H1 (cell line): ENCODE measurements at regions of chr18 and their contacts with region 1.

Region 1: DNA sequence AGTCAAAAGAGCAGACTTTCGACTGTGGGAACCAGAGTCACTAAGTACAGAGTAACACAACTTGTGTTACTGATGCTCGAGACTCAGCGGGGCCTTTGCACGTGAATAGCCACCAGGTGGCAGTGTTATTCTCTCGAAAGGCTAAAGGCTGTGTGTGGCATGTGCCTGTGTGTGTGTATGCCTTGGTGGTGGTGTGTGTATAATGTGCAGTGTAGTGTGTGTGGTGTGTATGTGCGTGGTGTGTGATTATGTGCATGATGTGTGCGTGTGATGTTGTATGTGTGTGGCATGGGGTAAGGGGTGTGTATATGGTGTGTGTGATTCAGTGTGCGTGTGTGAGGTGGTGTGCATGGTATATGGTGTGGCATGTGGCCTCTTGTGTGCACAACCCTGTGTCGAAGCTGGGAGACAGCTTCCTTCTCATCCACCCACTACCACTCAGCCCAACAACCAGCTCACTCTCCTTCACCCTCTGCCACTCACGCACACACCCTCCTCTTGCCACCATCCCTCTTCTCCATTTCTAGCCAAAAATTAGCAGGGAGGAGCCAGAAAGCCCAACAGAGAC is 83.0 kb upstream of the ZNF532 start:
- DNase-seq: peak; percentile 56 to 86
- H3K4me3 ChIP-seq: no peak overlapping the region
- H3K27ac ChIP-seq: no peak overlapping the region
- H3K4me1 ChIP-seq: peaks cover 5 to 17% (median 11%) of the 10 kb centered on the region in 4 experiments
- H3K27me3 ChIP-seq: no peaks in the 10 kb centered on the region
- CTCF ChIP-seq: peak; percentile 75 to 92 (median 86)
- EP300 ChIP-seq: no peak
- POLR2A ChIP-seq: no peak
- RAD21 ChIP-seq: peak; percentile 95 to 98

Region 2: GRCh38 chr18:58745914-58746313 is 35.8 kb before region 1 on chr18:
- CTCF ChIA-PET with region 1: no interaction called
- POLR2A ChIA-PET with region 1: no interaction called
- DNase-seq: no peak
- H3K4me3 ChIP-seq: no peak overlapping the region
- H3K27ac ChIP-seq: no peak overlapping the region
- H3K4me1 ChIP-seq: no peaks in the 10 kb centered on the region
- H3K27me3 ChIP-seq: no peaks in the 10 kb centered on the region
- CTCF ChIP-seq: no peak
- EP300 ChIP-seq: no peak
- POLR2A ChIP-seq: no peak
- RAD21 ChIP-seq: no peak

Region 3: DNA sequence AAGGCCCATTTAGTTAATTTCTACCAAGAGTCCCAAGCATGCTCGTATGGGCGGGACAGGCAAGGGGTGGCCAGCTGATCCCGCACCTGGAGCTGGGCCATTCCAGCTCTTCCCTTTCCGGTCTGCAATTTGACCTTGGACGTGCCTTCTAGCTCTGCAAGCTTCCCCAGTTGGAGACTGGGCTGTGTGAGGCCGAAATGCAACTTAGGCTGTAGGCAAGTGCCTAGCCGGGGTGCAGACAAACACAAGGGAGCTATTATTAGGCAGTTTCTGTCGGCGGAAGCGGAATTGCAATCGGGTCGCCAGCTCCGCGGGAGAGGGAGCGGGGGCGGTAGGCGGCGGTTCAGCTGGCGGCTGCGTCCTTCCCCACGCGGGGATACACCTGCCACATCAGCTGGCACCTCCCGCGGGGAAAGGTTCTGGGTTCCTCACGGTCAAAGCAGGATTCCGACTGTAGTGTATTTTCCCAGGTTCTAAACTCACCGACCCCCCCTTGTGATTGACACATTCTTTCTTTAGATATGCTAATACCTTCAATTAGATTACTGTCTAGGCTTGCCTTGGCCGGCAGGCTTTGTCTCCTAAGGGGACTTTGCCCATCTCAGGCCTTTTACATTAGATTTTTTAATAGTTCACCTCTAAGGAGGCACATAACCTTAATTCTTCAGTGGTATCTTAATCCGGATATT is 65.8 kb after region 1 on chr18:
- CTCF ChIA-PET with region 1: interaction called, 15 read pairs
- POLR2A ChIA-PET with region 1: interaction called, 4 read pairs
- DNase-seq: peak; percentile 88 to 94
- H3K4me3 ChIP-seq: peak overlapping the region in 1 of 4 experiments; percentile 28; a peak in 4 of 8 replicates
- H3K27ac ChIP-seq: peak overlapping the region; percentile 75
- H3K4me1 ChIP-seq: peaks cover 14 to 35% (median 34%) of the 10 kb centered on the region in 4 experiments; a peak in 6 of 7 replicates
- H3K27me3 ChIP-seq: no peaks in the 10 kb centered on the region
- CTCF ChIP-seq: no peak
- EP300 ChIP-seq: peak in 1 of 2 experiments; percentile 83; a peak in 1 of 3 replicates
- POLR2A ChIP-seq: peak in 1 of 2 experiments; percentile 57; a peak in 1 of 3 replicates
- RAD21 ChIP-seq: peak in 1 of 2 experiments; percentile 5; a peak in 1 of 4 replicates

Region 4: DNA sequence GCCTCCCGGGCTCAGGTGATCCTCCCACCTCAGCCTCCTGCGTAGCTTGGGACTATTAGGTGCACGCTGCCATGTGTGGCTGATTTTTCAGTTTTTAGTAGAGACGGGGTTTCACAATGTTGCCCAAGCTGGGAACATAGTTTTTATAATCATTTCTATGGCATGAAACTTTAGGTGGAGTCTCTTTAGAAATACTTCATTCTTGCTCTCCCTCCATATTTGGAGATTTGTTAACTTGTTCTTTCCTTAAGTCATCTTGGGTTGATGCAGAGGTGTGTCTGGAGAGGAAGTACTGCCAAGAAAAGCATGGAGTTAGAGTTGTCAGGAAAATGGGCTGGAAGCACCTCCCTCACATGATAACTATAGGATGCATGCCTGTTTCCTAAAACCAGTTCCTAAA is 100.3 kb after region 1 on chr18:
- CTCF ChIA-PET with region 1: interaction called, 52 read pairs
- POLR2A ChIA-PET with region 1: interaction called, 5 read pairs
- DNase-seq: no peak
- H3K4me3 ChIP-seq: no peak overlapping the region
- H3K27ac ChIP-seq: no peak overlapping the region
- H3K4me1 ChIP-seq: peaks cover 0 to 8% (median 1%) of the 10 kb centered on the region in 4 experiments; a peak in 2 of 7 replicates
- H3K27me3 ChIP-seq: no peaks in the 10 kb centered on the region
- CTCF ChIP-seq: no peak
- EP300 ChIP-seq: no peak
- POLR2A ChIP-seq: no peak
- RAD21 ChIP-seq: no peak

Region 5: GRCh38 chr18:58887613-58887963 is 105.9 kb after region 1 on chr18:
- CTCF ChIA-PET with region 1: interaction called, 52 read pairs
- POLR2A ChIA-PET with region 1: interaction called, 3 read pairs
- DNase-seq: no peak
- H3K4me3 ChIP-seq: no peak overlapping the region
- H3K27ac ChIP-seq: peak overlapping the region; percentile 23; the same call in 1 of the 2 replicates
- H3K4me1 ChIP-seq: peaks cover 0 to 9% (median 6%) of the 10 kb centered on the region in 4 experiments; a peak in 5 of 7 replicates
- H3K27me3 ChIP-seq: no peaks in the 10 kb centered on the region
- CTCF ChIP-seq: no peak
- EP300 ChIP-seq: no peak
- POLR2A ChIP-seq: no peak
- RAD21 ChIP-seq: no peak

Region 6: DNA sequence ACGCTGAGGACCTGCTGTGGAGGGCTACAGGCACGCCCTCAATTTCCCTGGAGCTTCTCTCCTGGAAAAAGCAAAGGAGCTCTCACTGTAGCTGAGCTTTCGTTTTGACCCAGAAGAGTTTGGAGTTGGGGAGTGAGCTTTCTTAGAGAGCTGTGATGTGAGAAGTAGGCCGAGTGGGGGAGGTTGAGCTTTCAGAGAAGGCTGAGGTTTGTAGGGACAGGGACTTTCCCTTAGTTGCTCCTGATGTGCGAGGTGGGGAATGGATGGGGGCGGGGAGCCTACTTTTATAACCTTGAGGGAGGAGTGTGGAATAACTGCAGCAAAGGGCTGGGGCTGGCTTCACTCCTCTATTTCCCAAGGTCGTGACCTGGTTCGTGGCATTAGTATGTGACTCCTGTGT is 130.1 kb after region 1 on chr18:
- CTCF ChIA-PET with region 1: interaction called, 10 read pairs
- POLR2A ChIA-PET with region 1: interaction called, 5 read pairs
- DNase-seq: peak in 1 of 2 experiments; percentile 46
- H3K4me3 ChIP-seq: peak overlapping the region in 1 of 4 experiments; percentile 16; a peak in 1 of 8 replicates
- H3K27ac ChIP-seq: peak overlapping the region; percentile 53; the same call in 1 of the 2 replicates
- H3K4me1 ChIP-seq: peaks cover 7 to 42% (median 40%) of the 10 kb centered on the region in 4 experiments
- H3K27me3 ChIP-seq: no peaks in the 10 kb centered on the region
- CTCF ChIP-seq: no peak
- EP300 ChIP-seq: no peak
- POLR2A ChIP-seq: no peak
- RAD21 ChIP-seq: no peak

Region 7: DNA sequence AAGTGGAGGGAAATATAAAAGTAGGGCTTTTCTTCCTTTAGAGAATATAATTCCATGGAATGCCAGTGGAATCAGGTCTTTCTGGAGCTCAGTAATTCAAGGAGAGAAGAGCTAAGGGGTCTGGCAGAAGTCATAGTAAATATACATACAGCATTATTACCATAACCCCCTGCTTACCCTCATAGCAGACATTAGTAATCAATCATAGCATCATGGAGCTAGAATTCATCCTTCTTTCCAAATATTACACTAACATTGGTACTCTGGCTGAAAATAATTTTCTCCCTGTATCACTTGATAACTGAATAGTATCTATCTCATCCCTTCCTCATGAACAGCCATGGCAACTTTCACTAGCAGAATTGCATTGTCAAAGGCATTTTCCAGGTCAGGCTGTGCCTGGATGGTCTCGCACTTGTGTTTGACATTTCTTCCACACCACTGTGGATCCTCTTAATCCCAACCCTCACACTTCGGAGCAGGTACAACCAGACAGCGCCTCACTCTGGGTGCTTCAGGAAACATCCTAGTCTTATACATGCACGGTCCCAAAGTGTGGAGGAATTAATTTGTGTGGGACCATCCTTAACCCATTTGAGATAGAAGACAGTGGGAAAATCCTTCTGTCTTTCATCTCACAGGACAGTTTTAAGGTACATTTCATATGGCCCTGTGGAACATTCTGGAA is 273.8 kb after region 1 on chr18:
- CTCF ChIA-PET with region 1: interaction called, 591 read pairs
- POLR2A ChIA-PET with region 1: interaction called, 5 read pairs
- DNase-seq: peak in 1 of 2 experiments; percentile 59
- H3K4me3 ChIP-seq: no peak overlapping the region
- H3K27ac ChIP-seq: no peak overlapping the region
- H3K4me1 ChIP-seq: peaks cover 0 to under 1% (median 0%) of the 10 kb centered on the region in 4 experiments; a peak in 2 of 7 replicates
- H3K27me3 ChIP-seq: no peaks in the 10 kb centered on the region
- CTCF ChIP-seq: peak; percentile 64 to 80 (median 67)
- EP300 ChIP-seq: no peak
- POLR2A ChIP-seq: no peak
- RAD21 ChIP-seq: peak; percentile 84 to 85